ENCODE measurements at regions of chr17 and their contacts with region 1.

Region 1: DNA sequence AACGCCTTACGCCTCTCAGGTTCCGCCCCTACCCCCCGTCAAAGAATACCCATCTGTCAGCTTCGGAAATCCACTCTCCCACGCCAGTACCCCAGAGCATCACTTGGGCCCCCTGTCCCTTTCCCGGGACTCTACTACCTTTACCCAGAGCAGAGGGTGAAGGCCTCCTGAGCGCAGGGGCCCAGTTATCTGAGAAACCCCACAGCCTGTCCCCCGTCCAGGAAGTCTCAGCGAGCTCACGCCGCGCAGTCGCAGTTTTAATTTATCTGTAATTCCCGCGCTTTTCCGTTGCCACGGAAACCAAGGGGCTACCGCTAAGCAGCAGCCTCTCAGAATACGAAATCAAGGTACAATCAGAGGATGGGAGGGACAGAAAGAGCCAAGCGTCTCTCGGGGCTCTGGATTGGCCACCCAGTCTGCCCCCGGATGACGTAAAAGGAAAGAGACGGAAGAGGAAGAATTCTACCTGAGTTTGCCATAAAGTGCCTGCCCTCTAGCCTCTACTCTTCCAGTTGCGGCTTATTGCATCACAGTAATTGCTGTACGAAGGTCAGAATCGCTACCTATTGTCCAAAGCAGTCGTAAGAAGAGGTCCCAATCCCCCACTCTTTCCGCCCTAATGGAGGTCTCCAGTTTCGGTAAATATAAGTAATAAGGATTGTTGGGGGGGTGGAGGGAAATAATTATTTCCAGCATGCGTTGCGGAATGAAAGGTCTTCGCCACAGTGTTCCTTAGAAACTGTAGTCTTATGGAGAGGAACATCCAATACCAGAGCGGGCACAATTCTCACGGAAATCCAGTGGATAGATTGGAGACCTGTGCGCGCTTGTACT is at the start of gene BRCA1:
- DNase-seq: peak; percentile 73 to 98 (median 87)

Region 2: GRCh38 chr17:42898147-42898807 is 227.1 kb before region 1 on chr17:
- intact Hi-C with region 1: no loop called
- DNase-seq: peak in 1 of 10 donors; percentile 41

Region 3: GRCh38 chr17:43170766-43171585 is 45.6 kb after region 1 on chr17 and contains the start of gene NBR1:
- intact Hi-C with region 1: loop called (anchors 5 kb)
- DNase-seq: peak; percentile 92 to 99 (median 96)

Region 4: GRCh38 chr17:43211480-43212402 is 86.4 kb after region 1 on chr17 and contains the start of gene TMEM106A:
- intact Hi-C with region 1: no loop called
- DNase-seq: peak in 5 of 10 donors; percentile 5 to 85 (median 19)

Measured in posterior cingulate gyrus (tissue), 11 donors.